ENCODE measurements at regions of chr16 and their contacts with region 1.

Region 1: GRCh38 chr16:15714393-15715172 is 64.5 kb downstream of the NDE1 start:
- DNase-seq: peak in 1 of 6 donors; percentile 52
- ATAC-seq: no peak
- H3K4me3 ChIP-seq: no peak overlapping the region
- H3K27ac ChIP-seq: no peak overlapping the region
- H3K4me1 ChIP-seq: no peaks in the 10 kb centered on the region
- H3K27me3 ChIP-seq: no peaks in the 10 kb centered on the region
- CTCF ChIP-seq: no peak

Region 2: DNA sequence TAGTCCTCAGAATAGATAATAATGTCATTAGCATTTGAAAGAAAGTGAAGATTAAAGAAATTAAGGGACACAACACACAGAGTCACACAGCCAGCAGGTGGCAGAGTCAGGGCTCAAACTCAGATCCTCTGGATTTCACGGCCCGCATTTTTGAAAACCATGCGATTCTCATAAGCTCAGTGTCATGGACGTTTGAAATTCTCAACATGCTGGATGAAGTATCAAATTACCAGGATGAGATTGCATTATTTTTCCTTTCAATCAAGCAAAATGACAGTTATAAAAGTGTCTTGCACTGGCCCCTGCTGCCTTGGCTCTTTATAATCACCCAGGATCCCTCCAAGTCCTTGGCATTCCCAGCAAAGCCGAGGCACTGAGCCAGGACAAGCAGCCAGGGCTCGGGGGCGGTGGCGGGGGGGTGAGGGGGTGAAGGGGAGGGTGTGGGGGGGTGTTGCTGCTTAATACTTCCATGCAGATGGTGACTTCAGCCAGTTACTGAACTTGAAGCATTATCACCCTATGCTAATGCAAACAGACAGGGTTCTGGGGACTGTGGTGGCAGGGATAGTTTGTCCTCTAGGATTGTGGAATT is 286.8 kb before region 1 on chr16:
- intact Hi-C with region 1: no loop called
- DNase-seq: peak; percentile 71 to 83 (median 77)
- ATAC-seq: peak; percentile 79 to 95 (median 93)
- H3K4me3 ChIP-seq: no peak overlapping the region
- H3K27ac ChIP-seq: peak overlapping the region in 1 of 4 donors; percentile 23
- H3K4me1 ChIP-seq: no peaks in the 10 kb centered on the region
- H3K27me3 ChIP-seq: no peaks in the 10 kb centered on the region
- CTCF ChIP-seq: peak; percentile 16 to 47 (median 42)

Region 3: GRCh38 chr16:15660203-15660601 is 54.4 kb before region 1 on chr16:
- intact Hi-C with region 1: loop called in 1 of 3 experiments (anchors 10 kb)
- DNase-seq: no peak
- ATAC-seq: no peak
- H3K4me3 ChIP-seq: no peak overlapping the region
- H3K27ac ChIP-seq: no peak overlapping the region
- H3K4me1 ChIP-seq: no peaks in the 10 kb centered on the region
- H3K27me3 ChIP-seq: no peaks in the 10 kb centered on the region
- CTCF ChIP-seq: no peak

Measured in pancreas (tissue), 10 donors.